ENCODE measurements at regions of chr5 and their contacts with region 1.

Region 1: GRCh38 chr5:133321833-133322420 is 270.1 kb downstream of the HSPA4 start:
- DNase-seq: peak; percentile 90
- H3K4me3 Mint-ChIP-seq: no peak overlapping the region
- H3K27ac Mint-ChIP-seq: peak overlapping the region; percentile 68
- H3K4me1 Mint-ChIP-seq: peaks cover 16% of the 10 kb centered on the region
- H3K27me3 Mint-ChIP-seq: no peaks in the 10 kb centered on the region

Region 2: DNA sequence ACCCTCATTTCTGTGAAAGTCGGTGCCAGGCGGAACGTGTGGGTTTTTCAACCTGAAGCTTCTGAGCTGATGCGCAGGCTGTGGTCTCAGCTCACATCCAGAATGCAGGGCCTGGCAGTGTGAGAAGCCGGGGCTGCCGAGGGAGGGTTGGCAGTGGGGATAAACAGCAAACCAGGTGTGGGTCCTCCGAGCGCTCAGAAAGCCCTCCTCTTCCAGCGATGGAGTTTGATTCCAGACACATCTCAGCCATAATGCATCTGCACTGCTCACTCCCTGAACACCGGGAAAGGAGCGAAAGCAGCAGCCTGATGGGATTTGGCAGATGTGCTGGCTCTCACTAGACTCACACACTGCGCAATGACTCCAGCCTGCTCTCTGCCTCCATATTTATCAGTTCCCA is 10.0 kb after region 1 on chr5:
- CTCF ChIA-PET with region 1: no interaction called
- intact Hi-C with region 1: loop called (anchors 1 kb)
- DNase-seq: peak; percentile 36
- H3K4me3 Mint-ChIP-seq: no peak overlapping the region
- H3K27ac Mint-ChIP-seq: no peak overlapping the region
- H3K4me1 Mint-ChIP-seq: peaks cover 18% of the 10 kb centered on the region
- H3K27me3 Mint-ChIP-seq: no peaks in the 10 kb centered on the region

Region 3: DNA sequence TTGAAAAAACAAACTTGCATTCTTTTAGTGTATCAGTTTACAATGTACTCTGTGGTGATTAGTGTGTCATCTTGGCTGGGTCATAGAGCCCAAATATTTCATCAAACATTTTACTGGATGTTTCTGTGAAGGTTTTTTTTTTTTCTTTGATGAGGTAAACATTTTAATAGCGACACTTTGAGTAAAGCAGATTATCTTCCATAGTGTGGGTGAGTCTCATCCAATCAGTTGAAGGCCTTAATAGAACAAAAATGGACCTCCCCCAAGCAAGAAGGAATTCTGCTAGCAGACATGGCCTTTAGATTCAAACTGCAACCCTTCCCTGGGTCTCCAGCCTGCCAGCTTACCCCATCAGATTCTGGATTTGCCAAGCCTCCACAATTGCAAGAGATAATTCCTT is 217.9 kb after region 1 on chr5:
- CTCF ChIA-PET with region 1: no interaction called
- intact Hi-C with region 1: no loop called
- DNase-seq: no peak
- H3K4me3 Mint-ChIP-seq: no peak overlapping the region
- H3K27ac Mint-ChIP-seq: no peak overlapping the region
- H3K4me1 Mint-ChIP-seq: no peaks in the 10 kb centered on the region
- H3K27me3 Mint-ChIP-seq: peaks cover 28% of the 10 kb centered on the region

Measured in activated naive CD4-positive, alpha-beta T cell treated with anti-CD3 and anti-CD28 coated beads for 36 hours (primary cell).